ENCODE measurements at regions of chr19 and their contacts with region 1.

Region 1: GRCh38 chr19:34171877-34172660 is at the start of gene LSM14A:
- DNase-seq: peak; percentile 33
- ATAC-seq: peak; percentile 76
- H3K4me3 ChIP-seq: peak within 1 kb of the TSS; percentile 80
- H3K27ac ChIP-seq: peak within 1 kb of the TSS; percentile 99
- H3K4me1 ChIP-seq: peaks cover 17% of the 10 kb centered on the region
- H3K27me3 ChIP-seq: no peaks in the 10 kb centered on the region
- CTCF ChIP-seq: no peak
- EP300 ChIP-seq: no peak
- POLR2A ChIP-seq: peak; percentile 96
- RAD21 ChIP-seq: no peak
- polyA plus RNA-seq, gene LSM14A: 21.9 to 31.1 TPM

Region 2: DNA sequence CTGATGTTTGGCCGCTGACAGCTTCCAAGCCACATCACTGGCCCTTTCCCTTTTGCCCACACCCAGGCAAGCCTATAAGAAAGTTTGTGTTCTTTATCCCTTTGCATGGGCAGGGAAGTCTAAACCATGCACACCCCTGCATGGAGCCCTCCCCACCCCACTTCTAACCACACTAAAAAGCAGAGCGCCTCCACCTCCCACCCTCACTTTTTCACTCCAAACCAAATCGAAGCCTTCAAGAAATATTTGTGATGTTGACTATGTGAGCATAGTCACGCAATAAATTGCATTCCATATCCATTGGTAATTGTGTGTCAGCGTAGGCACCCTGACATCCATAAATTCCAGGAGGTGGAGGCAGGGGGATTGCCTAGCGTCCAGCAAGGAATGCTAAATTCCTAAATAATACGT is 104.2 kb before region 1 on chr19:
- CTCF ChIA-PET with region 1: no interaction called
- POLR2A ChIA-PET with region 1: no interaction called
- RAD21 ChIA-PET with region 1: no interaction called
- SMC1A ChIA-PET with region 1: no interaction called
- in situ Hi-C with region 1: no loop called
- intact Hi-C with region 1: no loop called
- DNase-seq: no peak
- ATAC-seq: no peak
- H3K4me3 ChIP-seq: no peak overlapping the region
- H3K27ac ChIP-seq: no peak overlapping the region
- H3K4me1 ChIP-seq: no peaks in the 10 kb centered on the region
- H3K27me3 ChIP-seq: no peaks in the 10 kb centered on the region
- CTCF ChIP-seq: no peak
- EP300 ChIP-seq: no peak
- POLR2A ChIP-seq: no peak
- RAD21 ChIP-seq: no peak

Region 3: DNA sequence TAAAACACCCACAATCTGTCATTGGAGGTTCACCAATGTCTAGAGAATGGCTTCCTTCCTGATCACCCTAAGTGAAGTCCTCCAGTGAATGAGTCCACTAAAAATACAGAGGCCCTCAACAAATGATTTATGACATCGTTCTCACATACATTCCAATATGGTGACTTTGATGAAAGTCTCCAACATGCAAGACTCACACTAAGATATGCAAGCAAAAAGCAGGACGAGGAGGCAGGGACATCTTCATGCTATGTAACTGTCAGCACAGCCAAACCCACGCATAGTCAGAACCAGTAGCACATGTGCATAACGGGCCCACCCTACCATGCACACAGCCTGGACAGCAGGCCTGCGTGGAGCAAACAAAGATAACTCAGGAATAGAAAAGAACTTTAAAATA is 16.4 kb before region 1 on chr19:
- CTCF ChIA-PET with region 1: no interaction called
- POLR2A ChIA-PET with region 1: no interaction called
- RAD21 ChIA-PET with region 1: no interaction called
- SMC1A ChIA-PET with region 1: no interaction called
- in situ Hi-C with region 1: no loop called
- intact Hi-C with region 1: no loop called
- DNase-seq: no peak
- ATAC-seq: no peak
- H3K4me3 ChIP-seq: no peak overlapping the region
- H3K27ac ChIP-seq: no peak overlapping the region
- H3K4me1 ChIP-seq: no peaks in the 10 kb centered on the region
- H3K27me3 ChIP-seq: no peaks in the 10 kb centered on the region
- CTCF ChIP-seq: no peak
- EP300 ChIP-seq: no peak
- POLR2A ChIP-seq: no peak
- RAD21 ChIP-seq: no peak

Region 4: GRCh38 chr19:34184880-34185491 is 12.9 kb after region 1 on chr19:
- CTCF ChIA-PET with region 1: interaction called, 4 read pairs
- POLR2A ChIA-PET with region 1: interaction called, 5 read pairs
- RAD21 ChIA-PET with region 1: interaction called, 11 read pairs
- SMC1A ChIA-PET with region 1: interaction called, 21 read pairs
- in situ Hi-C with region 1: no loop called
- intact Hi-C with region 1: no loop called
- DNase-seq: no peak
- ATAC-seq: peak; percentile 56
- H3K4me3 ChIP-seq: no peak overlapping the region
- H3K27ac ChIP-seq: 0 out of 2 replicates have a peak overlapping the region, but pooled peaks have one; percentile 0
- H3K4me1 ChIP-seq: no peaks in the 10 kb centered on the region; the same call in 1 of the 2 replicates
- H3K27me3 ChIP-seq: no peaks in the 10 kb centered on the region
- CTCF ChIP-seq: no peak
- EP300 ChIP-seq: no peak
- POLR2A ChIP-seq: no peak
- RAD21 ChIP-seq: no peak

Region 5: GRCh38 chr19:34244611-34245299 is 72.7 kb after region 1 on chr19:
- CTCF ChIA-PET with region 1: no interaction called
- POLR2A ChIA-PET with region 1: no interaction called
- RAD21 ChIA-PET with region 1: no interaction called
- SMC1A ChIA-PET with region 1: no interaction called
- in situ Hi-C with region 1: no loop called
- intact Hi-C with region 1: no loop called
- DNase-seq: no peak
- ATAC-seq: no peak
- H3K4me3 ChIP-seq: no peak overlapping the region
- H3K27ac ChIP-seq: no peak overlapping the region
- H3K4me1 ChIP-seq: peaks cover 7% of the 10 kb centered on the region; the same call in 1 of the 2 replicates
- H3K27me3 ChIP-seq: no peaks in the 10 kb centered on the region
- CTCF ChIP-seq: no peak
- EP300 ChIP-seq: no peak
- POLR2A ChIP-seq: no peak
- RAD21 ChIP-seq: no peak

Region 6: DNA sequence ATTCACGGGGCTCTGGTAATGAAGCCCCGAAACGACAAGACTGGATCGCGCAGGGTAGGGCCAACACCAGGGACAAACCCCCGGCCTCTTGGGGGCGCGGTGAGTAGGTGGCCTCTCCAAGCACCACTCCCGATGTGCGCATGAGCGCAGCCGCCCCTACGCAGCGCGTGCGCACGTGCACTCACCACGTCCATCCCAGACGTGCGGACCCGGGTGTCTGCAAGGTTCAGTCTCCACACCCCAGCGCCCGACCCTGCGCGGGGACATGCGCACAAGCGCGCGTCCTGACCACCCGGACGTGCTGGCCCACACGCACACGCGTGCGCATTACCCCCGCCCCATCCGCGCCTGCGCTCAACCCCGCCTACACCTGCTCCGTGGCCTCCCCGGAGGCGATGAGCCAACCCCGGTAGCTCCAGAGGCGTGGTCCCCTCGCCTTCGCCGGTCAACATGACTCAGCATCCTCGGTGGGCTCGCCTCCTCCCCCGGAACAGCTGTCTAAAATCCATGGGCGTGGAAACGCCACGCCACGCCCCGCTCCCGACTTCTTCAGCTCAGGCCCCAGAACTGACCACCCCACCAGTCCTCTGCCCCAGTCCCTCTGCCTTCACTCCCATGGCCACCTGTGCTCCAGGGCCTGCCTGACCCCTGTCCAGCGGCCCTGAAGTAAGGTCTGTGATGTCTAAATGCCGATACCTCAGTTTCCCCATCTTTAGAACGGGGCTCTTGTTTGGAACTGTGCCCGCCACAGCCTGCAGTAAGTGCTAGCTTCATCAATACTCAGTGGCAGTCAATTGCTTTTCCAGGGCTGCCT is 187.3 kb after region 1 on chr19:
- CTCF ChIA-PET with region 1: interaction called, 3 read pairs
- POLR2A ChIA-PET with region 1: interaction called, 10 read pairs
- RAD21 ChIA-PET with region 1: no interaction called
- SMC1A ChIA-PET with region 1: no interaction called
- in situ Hi-C with region 1: no loop called
- intact Hi-C with region 1: no loop called
- DNase-seq: peak; percentile 99
- ATAC-seq: peak; percentile 98
- H3K4me3 ChIP-seq: peak overlapping the region; percentile 46; the same call in 1 of the 2 replicates
- H3K27ac ChIP-seq: peak overlapping the region; percentile 90
- H3K4me1 ChIP-seq: peaks cover 21% of the 10 kb centered on the region
- H3K27me3 ChIP-seq: no peaks in the 10 kb centered on the region
- CTCF ChIP-seq: peak; percentile 61 to 71 (median 67)
- EP300 ChIP-seq: peak; percentile 18 to 25; a peak in 1 of 4 replicates
- POLR2A ChIP-seq: peak; percentile 84
- RAD21 ChIP-seq: no peak